AG04450 (cell line): ENCODE measurements at regions of chr6 and their contacts with region 1.

Region 1: GRCh38 chr6:134331256-134331655 is 13.3 kb upstream of the SGK1 start:
- DNase-seq: no peak
- H3K4me3 ChIP-seq: no peak overlapping the region
- H3K27ac ChIP-seq: no peak overlapping the region
- H3K27me3 ChIP-seq: no peaks in the 10 kb centered on the region
- CTCF ChIP-seq: no peak

Region 2: GRCh38 chr6:134379086-134379485 is 47.8 kb after region 1 on chr6:
- CTCF ChIA-PET with region 1: interaction called, 11 read pairs
- POLR2A ChIA-PET with region 1: no interaction called
- DNase-seq: no peak
- H3K4me3 ChIP-seq: no peak overlapping the region
- H3K27ac ChIP-seq: no peak overlapping the region
- H3K27me3 ChIP-seq: no peaks in the 10 kb centered on the region
- CTCF ChIP-seq: no peak

Region 3: DNA sequence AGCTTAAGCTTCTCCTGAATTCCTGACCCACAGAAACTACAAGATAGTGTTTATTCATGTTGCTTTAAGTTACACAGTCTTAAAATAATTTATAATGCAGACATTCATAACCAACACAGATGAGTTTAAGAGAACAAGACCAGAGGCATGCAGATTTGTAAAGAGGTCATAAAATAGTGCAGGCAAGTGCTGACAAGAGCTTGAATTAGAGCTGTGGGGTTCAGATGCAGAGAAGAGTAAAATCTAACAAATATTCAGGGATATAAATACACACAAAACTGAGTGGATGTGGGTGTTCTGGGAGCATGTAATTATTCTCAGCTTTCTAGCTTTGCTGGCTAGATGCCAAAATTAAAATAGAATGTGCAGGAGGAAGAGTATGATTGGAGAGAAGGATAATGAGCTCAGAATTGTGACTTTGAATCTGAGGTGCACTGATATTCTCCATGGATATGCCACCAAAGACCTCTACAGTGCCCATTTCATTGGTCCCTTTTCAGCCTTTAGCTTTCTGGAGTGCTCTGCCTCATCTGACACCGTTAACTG is 278.5 kb after region 1 on chr6:
- CTCF ChIA-PET with region 1: no interaction called
- POLR2A ChIA-PET with region 1: no interaction called
- DNase-seq: no peak
- H3K4me3 ChIP-seq: no peak overlapping the region
- H3K27ac ChIP-seq: no peak overlapping the region
- H3K27me3 ChIP-seq: no peaks in the 10 kb centered on the region
- CTCF ChIP-seq: no peak

Region 4: GRCh38 chr6:134903448-134903847 is 572.2 kb after region 1 on chr6:
- CTCF ChIA-PET with region 1: no interaction called
- POLR2A ChIA-PET with region 1: no interaction called
- DNase-seq: no peak
- H3K4me3 ChIP-seq: no peak overlapping the region
- H3K27ac ChIP-seq: no peak overlapping the region
- H3K27me3 ChIP-seq: no peaks in the 10 kb centered on the region
- CTCF ChIP-seq: no peak